Colonic mucosa (tissue), 4 donors: ENCODE measurements at regions of chr10 and their contacts with region 1.

Region 1: DNA sequence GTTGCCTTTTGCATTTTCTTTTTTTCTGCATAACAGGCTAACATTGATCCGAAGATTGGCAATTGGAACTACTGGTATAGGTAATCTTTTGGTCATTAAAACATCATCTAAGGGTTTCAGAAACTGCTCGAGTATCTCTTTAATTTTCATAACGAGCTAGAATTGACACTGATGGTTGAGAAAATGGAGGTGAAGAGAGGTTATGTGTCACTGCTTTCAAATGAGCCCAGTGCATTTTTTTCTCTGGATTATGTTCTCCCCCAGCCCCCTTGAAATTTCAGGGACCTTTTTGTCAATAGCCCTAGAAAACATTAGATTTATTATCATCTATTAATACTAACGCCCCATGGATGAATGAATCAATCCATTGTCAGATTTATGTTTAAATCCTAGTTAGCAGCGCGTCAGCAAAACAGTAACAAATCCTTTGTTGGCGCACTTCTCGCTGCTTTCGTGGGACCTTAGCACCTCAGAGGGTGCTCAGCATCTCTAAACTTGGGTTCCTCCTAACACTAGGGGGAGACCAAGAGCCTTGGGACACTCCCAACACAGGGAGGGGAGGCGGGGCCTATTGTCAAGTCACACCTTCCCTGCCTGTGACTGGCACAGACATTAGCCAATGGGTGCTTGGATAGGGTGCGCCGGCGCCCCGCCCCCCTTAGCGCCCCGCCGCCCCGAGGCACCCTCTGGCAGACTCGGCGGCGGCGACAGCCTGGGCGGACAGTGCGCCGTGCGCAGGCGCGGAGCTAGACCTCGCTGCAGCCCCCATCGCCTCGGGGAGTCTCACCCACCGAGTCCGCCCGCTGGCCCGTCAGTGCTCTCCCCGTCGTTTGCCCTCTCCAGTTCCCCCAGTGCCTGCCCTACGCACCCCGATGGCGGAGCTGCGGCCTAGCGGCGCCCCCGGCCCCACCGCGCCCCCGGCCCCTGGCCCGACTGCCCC is at the start of gene SUFU:
- DNase-seq: peak; percentile 99
- H3K4me3 ChIP-seq: peak within 1 kb of the TSS; percentile 66
- H3K27ac ChIP-seq: peak within 1 kb of the TSS; percentile 74
- H3K4me1 ChIP-seq: peaks cover 17% of the 10 kb centered on the region
- H3K27me3 ChIP-seq: no peaks in the 10 kb centered on the region
- CTCF ChIP-seq: peak; percentile 83
- total RNA-seq, gene SUFU: 7.6 to 8.6 TPM

Region 2: DNA sequence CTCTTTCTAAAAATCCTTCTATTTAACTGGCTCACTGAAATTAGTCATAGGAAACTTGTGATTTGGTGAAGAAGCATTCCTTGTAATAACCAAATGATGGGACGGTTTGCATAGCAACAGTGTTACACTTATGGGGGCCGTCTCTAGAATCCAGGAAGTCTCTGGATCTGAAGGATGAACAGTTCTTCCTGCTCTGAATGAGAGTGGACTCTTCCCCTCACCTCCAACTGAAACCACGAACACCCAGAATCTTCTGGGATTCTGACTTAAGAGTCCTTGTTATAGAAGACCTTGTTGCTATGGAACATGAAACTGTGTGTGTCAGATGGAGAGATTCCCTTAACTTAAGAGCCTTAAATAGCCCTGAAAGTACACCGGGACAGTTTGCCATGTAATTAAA is 328.1 kb before region 1 on chr10:
- intact Hi-C with region 1: no loop called
- DNase-seq: no peak
- H3K4me3 ChIP-seq: no peak overlapping the region
- H3K27ac ChIP-seq: no peak overlapping the region
- H3K4me1 ChIP-seq: no peaks in the 10 kb centered on the region
- H3K27me3 ChIP-seq: no peaks in the 10 kb centered on the region
- CTCF ChIP-seq: no peak

Region 3: DNA sequence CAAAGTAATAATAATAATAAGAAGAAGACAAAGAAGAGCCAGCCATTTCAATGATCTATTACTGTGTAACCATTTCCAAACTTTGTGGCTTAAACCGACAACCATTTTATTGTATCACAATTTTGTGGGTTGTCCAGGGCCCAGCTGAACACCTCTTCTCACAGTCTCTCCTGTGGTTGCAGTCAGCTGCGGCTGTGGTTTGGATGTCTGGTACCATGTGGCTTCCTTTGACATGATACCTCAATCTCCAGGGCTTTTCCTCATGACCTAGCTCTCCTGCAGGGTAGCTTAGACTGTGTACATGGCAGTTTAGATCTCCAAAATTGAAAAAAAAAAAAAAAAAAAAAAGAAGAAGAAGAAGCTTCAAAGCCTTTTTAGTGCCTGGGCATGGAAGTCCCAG is 180.6 kb before region 1 on chr10:
- intact Hi-C with region 1: no loop called
- DNase-seq: no peak
- H3K4me3 ChIP-seq: no peak overlapping the region
- H3K27ac ChIP-seq: no peak overlapping the region
- H3K4me1 ChIP-seq: no peaks in the 10 kb centered on the region
- H3K27me3 ChIP-seq: no peaks in the 10 kb centered on the region
- CTCF ChIP-seq: no peak

Region 4: DNA sequence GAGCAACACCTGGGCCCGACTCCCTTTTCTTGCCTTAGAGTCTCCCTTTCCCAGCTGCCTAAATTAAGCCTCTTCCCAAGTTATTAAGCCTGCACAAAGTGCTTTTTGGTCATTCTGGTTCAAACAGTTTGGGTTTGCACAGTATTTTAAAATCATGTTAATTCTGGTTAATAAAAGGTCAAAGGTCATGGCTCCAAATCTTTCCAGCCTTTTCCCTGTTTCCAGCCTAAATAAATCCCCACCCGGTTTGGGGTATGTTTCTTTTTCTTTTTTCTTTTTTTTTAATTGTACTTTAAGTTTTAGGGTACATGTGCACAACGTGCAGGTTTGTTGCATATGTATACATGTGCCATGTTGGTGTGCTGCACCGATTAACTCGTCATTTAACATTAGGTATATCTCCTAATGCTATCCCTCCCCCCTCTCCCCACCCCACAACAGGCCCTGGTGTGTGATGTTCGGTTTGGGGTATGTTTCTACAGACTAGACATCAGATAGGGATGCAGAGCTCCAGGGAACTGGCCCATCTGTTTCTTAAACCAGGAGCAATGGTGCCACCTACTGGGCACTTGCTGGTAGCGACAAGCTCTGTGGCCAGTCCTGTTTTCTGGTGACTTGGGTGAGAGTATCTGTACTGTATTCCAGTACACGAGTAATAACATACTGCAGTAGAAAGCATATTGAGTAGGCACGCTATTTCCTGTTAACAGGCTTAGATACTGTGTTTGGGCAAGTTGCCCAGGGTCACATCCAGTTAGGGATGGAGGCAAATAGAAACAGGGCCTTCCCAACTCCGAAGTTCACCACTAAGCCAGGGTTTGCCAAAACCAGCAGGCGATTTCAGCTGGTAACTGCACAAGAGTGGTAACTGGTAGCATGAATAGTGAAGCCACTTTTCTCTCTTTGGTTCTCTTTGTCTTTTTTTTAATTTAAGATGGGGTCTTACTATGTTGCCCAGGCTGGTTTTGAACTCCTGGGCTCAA is 80.2 kb after region 1 on chr10:
- intact Hi-C with region 1: loop called (anchors 2 kb)
- DNase-seq: peak; percentile 85
- H3K4me3 ChIP-seq: no peak overlapping the region
- H3K27ac ChIP-seq: no peak overlapping the region
- H3K4me1 ChIP-seq: no peaks in the 10 kb centered on the region
- H3K27me3 ChIP-seq: no peaks in the 10 kb centered on the region
- CTCF ChIP-seq: peak; percentile 71

Region 5: GRCh38 chr10:102704915-102705314 is 201.4 kb after region 1 on chr10:
- intact Hi-C with region 1: loop called (anchors 10 kb)
- DNase-seq: no peak
- H3K4me3 ChIP-seq: no peak overlapping the region
- H3K27ac ChIP-seq: no peak overlapping the region
- H3K4me1 ChIP-seq: no peaks in the 10 kb centered on the region
- H3K27me3 ChIP-seq: no peaks in the 10 kb centered on the region
- CTCF ChIP-seq: no peak

Region 6: DNA sequence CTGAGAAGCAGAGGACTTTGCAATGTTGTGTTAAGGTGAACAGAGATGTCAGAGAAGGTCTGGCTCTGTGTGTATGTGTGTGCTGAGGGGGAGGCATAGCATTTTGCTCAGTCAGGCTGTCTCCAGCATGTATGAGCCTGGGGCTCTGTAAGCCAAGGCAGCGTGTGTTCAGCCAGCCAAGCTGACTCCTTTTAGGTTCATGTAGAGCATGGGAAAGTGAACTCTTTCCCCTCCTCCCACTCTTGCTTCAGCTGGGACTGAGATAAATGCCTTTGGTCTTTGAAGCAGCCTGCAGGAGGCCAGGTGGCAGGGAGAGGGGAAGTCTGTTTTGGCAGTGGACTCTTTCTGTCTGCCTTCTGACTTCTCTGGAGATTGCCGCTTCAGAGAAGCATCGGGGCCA is 214.7 kb after region 1 on chr10:
- intact Hi-C with region 1: no loop called
- DNase-seq: no peak
- H3K4me3 ChIP-seq: no peak overlapping the region
- H3K27ac ChIP-seq: no peak overlapping the region
- H3K4me1 ChIP-seq: peaks cover 5% of the 10 kb centered on the region
- H3K27me3 ChIP-seq: no peaks in the 10 kb centered on the region
- CTCF ChIP-seq: no peak